H1 (cell line): ENCODE measurements at regions of chr10 and their contacts with region 1.

Region 1: GRCh38 chr10:102352066-102352715 is 43.3 kb upstream of the NFKB2 start:
- DNase-seq: peak in 1 of 2 experiments; percentile 86
- H3K4me3 ChIP-seq: no peak overlapping the region
- H3K27ac ChIP-seq: no peak overlapping the region
- H3K4me1 ChIP-seq: no peaks in the 10 kb centered on the region
- H3K27me3 ChIP-seq: no peaks in the 10 kb centered on the region; a peak in 1 of 7 replicates
- CTCF ChIP-seq: peak; percentile 77 to 94 (median 91)
- EP300 ChIP-seq: no peak
- POLR2A ChIP-seq: no peak
- RAD21 ChIP-seq: peak; percentile 84 to 90

Region 2: DNA sequence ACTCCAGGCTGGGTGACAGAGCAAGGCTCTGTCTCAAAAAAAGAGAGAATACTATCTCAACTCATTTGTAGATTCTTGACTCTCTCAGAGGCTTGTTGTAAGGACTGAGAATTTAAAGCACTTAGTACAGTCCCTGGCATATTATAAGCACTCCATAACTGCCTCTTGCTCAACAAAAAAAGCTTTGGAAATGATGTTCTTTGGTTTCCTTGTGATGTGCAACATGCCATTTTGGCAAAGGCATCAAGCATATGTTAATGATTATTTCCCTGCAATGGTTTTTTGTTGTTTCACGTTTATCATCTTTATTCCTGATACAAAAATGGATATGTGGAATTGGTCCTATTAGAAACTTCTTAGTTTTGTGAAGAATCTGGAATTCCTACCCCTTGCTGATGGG is 184.3 kb before region 1 on chr10:
- CTCF ChIA-PET with region 1: interaction called, 17 read pairs
- POLR2A ChIA-PET with region 1: no interaction called
- DNase-seq: no peak
- H3K4me3 ChIP-seq: no peak overlapping the region
- H3K27ac ChIP-seq: no peak overlapping the region
- H3K4me1 ChIP-seq: peaks cover 0 to 4% (median 0%) of the 10 kb centered on the region in 4 experiments; a peak in 2 of 7 replicates
- H3K27me3 ChIP-seq: no peaks in the 10 kb centered on the region
- CTCF ChIP-seq: no peak
- EP300 ChIP-seq: no peak
- POLR2A ChIP-seq: no peak
- RAD21 ChIP-seq: no peak

Region 3: GRCh38 chr10:102245101-102245931 is 106.9 kb before region 1 on chr10 and contains the start of gene GBF1:
- CTCF ChIA-PET with region 1: interaction called, 862 read pairs
- POLR2A ChIA-PET with region 1: interaction called, 3 read pairs
- DNase-seq: peak; percentile 88 to 90
- H3K4me3 ChIP-seq: peak within 1 kb of the TSS; percentile 86 to 98 (median 92)
- H3K27ac ChIP-seq: peak within 1 kb of the TSS; percentile 43; the same call in 1 of the 2 replicates
- H3K4me1 ChIP-seq: peaks cover 4 to 16% (median 7%) of the 10 kb centered on the region in 4 experiments
- H3K27me3 ChIP-seq: peaks cover 20 to 32% (median 25%) of the 10 kb centered on the region in 4 experiments
- CTCF ChIP-seq: no peak
- EP300 ChIP-seq: no peak
- POLR2A ChIP-seq: peak in 1 of 2 experiments; percentile 78; a peak in 2 of 3 replicates
- RAD21 ChIP-seq: no peak
- total RNA-seq, gene GBF1: 24.4 and 25.5 TPM in 2 replicates

Region 4: GRCh38 chr10:102268375-102268888 is 83.8 kb before region 1 on chr10:
- CTCF ChIA-PET with region 1: interaction called, 19 read pairs
- POLR2A ChIA-PET with region 1: no interaction called
- DNase-seq: no peak
- H3K4me3 ChIP-seq: no peak overlapping the region
- H3K27ac ChIP-seq: no peak overlapping the region
- H3K4me1 ChIP-seq: no peaks in the 10 kb centered on the region
- H3K27me3 ChIP-seq: no peaks in the 10 kb centered on the region
- CTCF ChIP-seq: no peak
- EP300 ChIP-seq: no peak
- POLR2A ChIP-seq: no peak
- RAD21 ChIP-seq: no peak

Region 5: GRCh38 chr10:102334101-102334500 is 18.1 kb before region 1 on chr10:
- CTCF ChIA-PET with region 1: interaction called, 17 read pairs
- POLR2A ChIA-PET with region 1: no interaction called
- DNase-seq: no peak
- H3K4me3 ChIP-seq: no peak overlapping the region
- H3K27ac ChIP-seq: no peak overlapping the region
- H3K4me1 ChIP-seq: no peaks in the 10 kb centered on the region
- H3K27me3 ChIP-seq: peaks cover 0 to 2% (median 0%) of the 10 kb centered on the region in 4 experiments; a peak in 1 of 7 replicates
- CTCF ChIP-seq: no peak
- EP300 ChIP-seq: no peak
- POLR2A ChIP-seq: no peak
- RAD21 ChIP-seq: no peak

Region 6: GRCh38 chr10:102384053-102384452 is 31.9 kb after region 1 on chr10:
- CTCF ChIA-PET with region 1: interaction called, 65 read pairs
- POLR2A ChIA-PET with region 1: no interaction called
- DNase-seq: peak in 1 of 2 experiments; percentile 63
- H3K4me3 ChIP-seq: no peak overlapping the region
- H3K27ac ChIP-seq: no peak overlapping the region
- H3K4me1 ChIP-seq: 0 out of 7 replicates have a peak, but pooled peaks cover 0 to 2% (median 0%) of the 10 kb centered on the region in 4 experiments
- H3K27me3 ChIP-seq: no peaks in the 10 kb centered on the region
- CTCF ChIP-seq: peak; percentile 83 to 87 (median 84)
- EP300 ChIP-seq: no peak
- POLR2A ChIP-seq: no peak
- RAD21 ChIP-seq: peak; percentile 66 to 72